H1 (cell line): ENCODE measurements at regions of chr1 and their contacts with region 1.

Region 1: GRCh38 chr1:25232027-25232865 is at the start of gene SYF2:
- DNase-seq: peak; percentile 78 to 93
- H3K4me3 ChIP-seq: peak within 1 kb of the TSS; percentile 61 to 100 (median 90)
- H3K27ac ChIP-seq: peak within 1 kb of the TSS; percentile 94
- H3K4me1 ChIP-seq: peaks cover 0 to 5% (median 3%) of the 10 kb centered on the region in 4 experiments; a peak in 5 of 7 replicates
- H3K27me3 ChIP-seq: no peaks in the 10 kb centered on the region
- CTCF ChIP-seq: no peak; a peak in 1 of 4 replicates
- EP300 ChIP-seq: no peak
- POLR2A ChIP-seq: peak; percentile 75 to 96
- RAD21 ChIP-seq: no peak
- total RNA-seq, gene SYF2: 27.0 and 33.0 TPM in 2 replicates

Region 2: DNA sequence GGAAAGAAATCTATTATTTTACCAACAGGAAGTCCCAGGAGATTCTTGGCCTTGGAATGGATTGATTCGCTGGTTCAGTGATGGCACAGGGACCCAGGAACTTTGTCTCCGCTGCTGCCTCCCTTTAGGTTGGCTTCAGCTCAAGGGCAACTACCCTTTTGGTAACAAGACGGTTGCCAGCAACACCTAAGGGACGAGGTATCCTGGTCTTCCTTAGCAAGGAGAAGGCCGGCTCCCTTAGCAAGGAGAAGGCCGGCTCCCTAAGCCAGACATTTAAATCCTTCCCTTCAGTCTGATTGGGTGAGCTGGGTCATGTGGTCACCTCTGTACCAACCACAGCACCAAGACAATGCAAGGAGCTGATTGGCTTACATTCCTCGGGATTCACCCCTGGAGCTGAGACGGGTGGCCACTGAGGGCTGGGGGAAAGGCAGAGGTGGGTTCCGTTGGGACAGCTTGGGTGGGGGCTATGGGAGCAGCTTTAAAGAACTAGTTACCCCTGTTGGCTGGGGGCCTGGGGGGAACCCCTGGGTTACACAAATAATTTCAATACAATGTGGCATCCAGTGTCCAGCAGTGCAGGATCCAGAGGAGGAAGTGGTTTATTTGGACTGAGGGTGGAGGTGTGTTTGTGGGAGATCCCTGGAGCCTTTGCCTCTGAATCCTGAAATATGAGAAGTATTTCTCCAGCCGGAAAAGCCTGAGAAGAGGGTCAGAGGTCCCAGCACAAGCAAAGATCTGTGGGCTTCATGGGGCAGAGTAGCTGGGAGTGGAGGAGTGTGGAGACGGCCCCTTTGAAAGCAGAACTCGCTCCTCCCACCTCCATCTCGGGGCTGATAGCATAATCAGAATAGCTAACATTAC is 507.7 kb before region 1 on chr1:
- CTCF ChIA-PET with region 1: no interaction called
- POLR2A ChIA-PET with region 1: no interaction called
- DNase-seq: peak in 1 of 2 experiments; percentile 74
- H3K4me3 ChIP-seq: peak overlapping the region in 1 of 4 experiments; percentile 34; a peak in 1 of 8 replicates
- H3K27ac ChIP-seq: peak overlapping the region; percentile 39; the same call in 1 of the 2 replicates
- H3K4me1 ChIP-seq: peaks cover 0 to 20% (median 8%) of the 10 kb centered on the region in 4 experiments; a peak in 6 of 7 replicates
- H3K27me3 ChIP-seq: no peaks in the 10 kb centered on the region
- CTCF ChIP-seq: no peak
- EP300 ChIP-seq: no peak
- POLR2A ChIP-seq: no peak
- RAD21 ChIP-seq: no peak

Region 3: GRCh38 chr1:24897767-24898483 is 334.3 kb before region 1 on chr1:
- CTCF ChIA-PET with region 1: no interaction called
- POLR2A ChIA-PET with region 1: no interaction called
- DNase-seq: peak; percentile 10 to 89
- H3K4me3 ChIP-seq: no peak overlapping the region
- H3K27ac ChIP-seq: no peak overlapping the region
- H3K4me1 ChIP-seq: no peaks in the 10 kb centered on the region; a peak in 1 of 7 replicates
- H3K27me3 ChIP-seq: no peaks in the 10 kb centered on the region
- CTCF ChIP-seq: peak; percentile 87 to 98 (median 98)
- EP300 ChIP-seq: no peak
- POLR2A ChIP-seq: no peak
- RAD21 ChIP-seq: peak; percentile 65 to 78

Region 4: GRCh38 chr1:25217598-25218232 is 14.5 kb before region 1 on chr1:
- CTCF ChIA-PET with region 1: interaction called, 4 read pairs
- POLR2A ChIA-PET with region 1: interaction called, 11 read pairs
- DNase-seq: no peak
- H3K4me3 ChIP-seq: no peak overlapping the region
- H3K27ac ChIP-seq: no peak overlapping the region
- H3K4me1 ChIP-seq: no peaks in the 10 kb centered on the region
- H3K27me3 ChIP-seq: no peaks in the 10 kb centered on the region
- CTCF ChIP-seq: peak in 2 of 3 experiments; percentile 22 to 28; a peak in 2 of 4 replicates
- EP300 ChIP-seq: no peak
- POLR2A ChIP-seq: no peak
- RAD21 ChIP-seq: peak; percentile 32 to 42; a peak in 3 of 4 replicates

Region 5: DNA sequence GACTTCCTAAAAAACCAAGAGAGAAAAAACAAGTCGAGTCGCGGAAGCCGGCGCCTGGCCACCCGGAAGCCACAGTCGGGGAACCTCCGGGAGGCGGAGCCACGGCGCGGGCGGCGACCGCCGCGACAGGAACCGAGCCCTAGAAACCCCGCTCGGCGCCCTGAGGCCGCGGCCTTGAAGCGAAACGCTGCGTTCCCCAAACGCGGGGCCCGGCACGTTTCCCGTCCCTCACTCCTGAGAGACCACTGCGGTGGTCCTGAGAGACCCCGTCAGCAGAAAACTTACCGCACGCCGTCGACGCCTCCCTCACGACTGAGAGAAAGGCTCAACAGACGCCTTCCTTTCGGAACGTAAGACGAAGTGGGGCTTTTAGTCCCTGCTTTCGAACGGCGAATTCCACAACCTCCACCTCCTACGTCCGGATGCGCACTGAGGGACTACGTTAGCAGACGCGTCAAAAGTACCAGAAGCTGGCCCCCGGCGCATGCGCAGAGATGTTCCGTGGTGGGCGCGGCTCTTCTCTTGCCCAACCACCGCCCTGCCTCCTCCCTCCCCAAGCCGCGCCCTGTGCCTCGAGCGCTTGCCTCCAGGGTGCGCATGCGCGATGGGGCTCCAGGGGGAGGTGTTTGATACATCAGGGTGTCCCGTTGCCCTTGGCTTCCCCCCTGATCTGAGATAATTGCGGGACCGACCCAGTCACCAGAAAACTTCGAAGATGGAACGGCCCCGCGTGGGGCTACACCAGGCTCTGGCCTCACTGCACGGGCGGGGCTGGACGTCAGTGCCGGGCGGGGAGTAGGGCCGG is 15.0 kb after region 1 on chr1 and contains the start of gene RSRP1:
- CTCF ChIA-PET with region 1: interaction called, 3 read pairs
- POLR2A ChIA-PET with region 1: interaction called, 66 read pairs
- DNase-seq: peak; percentile 96 to 99
- H3K4me3 ChIP-seq: peak within 1 kb of the TSS; percentile 67 to 99 (median 96)
- H3K27ac ChIP-seq: peak within 1 kb of the TSS; percentile 84; the same call in 1 of the 2 replicates
- H3K4me1 ChIP-seq: no peaks in the 10 kb centered on the region; a peak in 1 of 7 replicates
- H3K27me3 ChIP-seq: no peaks in the 10 kb centered on the region
- CTCF ChIP-seq: no peak
- EP300 ChIP-seq: no peak
- POLR2A ChIP-seq: peak; percentile 96 to 99
- RAD21 ChIP-seq: no peak
- total RNA-seq, gene RSRP1: 59.4 and 60.4 TPM in 2 replicates